ENCODE measurements at regions of chr9 and their contacts with region 1.

Region 1: DNA sequence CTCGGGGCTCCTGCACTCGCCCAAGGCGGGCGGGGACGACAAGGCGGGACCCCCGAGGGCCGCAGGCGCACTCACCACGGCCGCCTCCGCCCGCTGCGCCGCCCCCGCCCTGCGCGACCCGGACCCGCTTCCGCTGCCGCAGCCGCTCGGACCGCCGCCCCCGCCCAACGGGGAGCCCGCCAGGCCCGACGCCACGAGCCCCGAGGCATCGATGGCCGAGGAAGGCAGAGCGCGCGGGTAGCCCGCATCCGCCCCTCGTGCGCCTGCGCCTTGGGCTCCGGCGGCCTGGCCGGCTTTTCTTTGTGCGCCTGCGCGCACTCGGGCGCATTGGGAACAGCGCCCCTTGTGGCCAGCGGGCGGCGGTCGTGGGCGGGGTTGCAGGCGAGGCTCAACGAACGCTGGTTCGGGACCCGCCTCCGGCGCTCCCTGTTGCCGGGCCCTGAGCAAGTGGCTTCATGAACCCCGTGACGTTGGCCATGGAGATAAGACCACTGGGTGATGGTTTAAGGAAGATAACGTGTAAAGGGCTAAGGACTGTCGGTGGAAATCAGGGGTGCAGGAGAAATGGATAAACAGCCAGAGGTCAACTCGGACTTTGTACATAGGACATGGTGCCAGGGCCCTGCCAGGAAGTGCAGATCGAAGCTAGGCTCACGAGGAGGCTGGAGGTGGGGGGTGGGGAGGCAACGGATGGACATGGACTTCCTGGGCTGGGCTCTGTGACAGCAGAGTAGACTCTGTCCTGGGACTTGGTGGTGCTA is at the starts of genes C8G and FBXW5:
- DNase-seq: peak; percentile 96 to 99 (median 97)
- ATAC-seq: peak; percentile 23 to 72 (median 67)
- H3K4me3 ChIP-seq: peak within 1 kb of the TSS; percentile 67 to 97 (median 92)
- H3K27ac ChIP-seq: peak within 1 kb of the TSS; percentile 90 to 98 (median 97)
- H3K4me1 ChIP-seq: peaks cover 7 to 70% (median 40%) of the 10 kb centered on the region in 12 donors
- H3K27me3 ChIP-seq: no peaks in the 10 kb centered on the region
- CTCF ChIP-seq: peak; percentile 90 to 100 (median 98)
- POLR2A ChIP-seq: peak; percentile 59 to 84
- total RNA-seq, gene C8G: 1.2 to 3.7 (median 1.5) TPM in 7 of 9 donors, not detected in the others
- total RNA-seq, gene FBXW5: 110 to 388 (median 147) TPM

Region 2: GRCh38 chr9:136799854-136800657 is 144.6 kb before region 1 on chr9:
- intact Hi-C with region 1: loop called in 1 of 10 experiments (anchors 5 kb)
- DNase-seq: peak; percentile 76 to 92 (median 86)
- ATAC-seq: peak; percentile 59 to 80 (median 66)
- H3K4me3 ChIP-seq: peak overlapping the region; percentile 11 to 62 (median 48)
- H3K27ac ChIP-seq: peak overlapping the region in 7 of 12 donors; percentile 22 to 52 (median 39)
- H3K4me1 ChIP-seq: peaks cover 4 to 52% (median 33%) of the 10 kb centered on the region in 12 donors
- H3K27me3 ChIP-seq: peaks cover 6 to 55% (median 15%) of the 10 kb centered on the region in 9 donors
- CTCF ChIP-seq: no peak
- POLR2A ChIP-seq: no peak

Region 3: DNA sequence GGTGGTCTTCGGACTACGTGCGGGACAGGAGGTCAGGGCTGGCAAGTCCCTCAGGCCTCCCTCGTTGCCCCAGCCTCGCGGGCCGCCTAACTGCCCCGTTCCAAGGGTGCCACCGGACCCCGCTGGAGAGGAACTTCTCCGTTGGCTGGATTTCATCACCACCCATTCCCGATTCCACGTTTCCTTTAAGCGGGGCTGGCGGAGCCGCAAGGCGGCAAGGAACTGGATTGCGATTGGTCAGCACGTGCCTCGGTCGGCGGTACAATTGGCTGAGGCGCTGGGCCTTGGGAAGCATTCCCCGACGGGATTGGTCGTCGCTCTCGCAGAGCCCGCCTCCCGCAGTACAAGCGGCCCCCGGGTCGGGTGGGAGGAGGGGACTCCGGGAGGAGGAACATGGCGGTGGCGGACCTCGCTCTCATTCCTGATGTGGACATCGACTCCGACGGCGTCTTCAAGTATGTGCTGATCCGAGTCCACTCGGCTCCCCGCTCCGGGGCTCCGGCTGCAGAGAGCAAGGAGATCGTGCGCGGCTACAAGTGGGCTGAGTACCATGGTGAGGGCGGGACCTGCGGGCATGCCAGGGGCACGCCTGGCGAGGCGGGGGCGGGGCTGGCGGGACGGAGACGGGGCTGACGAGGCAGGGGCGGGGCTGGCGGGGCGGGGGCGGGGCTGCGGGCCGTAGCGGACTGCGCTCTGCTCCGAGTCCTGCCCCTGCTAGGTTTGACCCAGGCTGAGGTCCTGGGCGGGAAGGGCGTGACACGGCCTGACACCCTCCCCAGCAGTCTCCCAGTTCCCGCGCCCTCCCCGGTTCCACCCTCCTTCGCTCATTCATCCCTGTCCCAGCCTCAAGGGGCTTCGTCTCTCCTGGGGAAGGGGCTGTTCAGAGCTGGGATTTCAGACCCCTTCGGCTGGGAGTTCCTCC is 95.4 kb before region 1 on chr9 and contains the start of gene PHPT1:
- intact Hi-C with region 1: loop called in 9 of 10 experiments (anchors 2 to 5 kb)
- DNase-seq: peak; percentile 99
- ATAC-seq: peak; percentile 84 to 94 (median 89)
- H3K4me3 ChIP-seq: peak within 1 kb of the TSS; percentile 63 to 93 (median 84)
- H3K27ac ChIP-seq: peak within 1 kb of the TSS; percentile 80 to 97 (median 92)
- H3K4me1 ChIP-seq: peaks cover 4 to 61% (median 27%) of the 10 kb centered on the region in 12 donors
- H3K27me3 ChIP-seq: peaks cover 0 to 28% (median 13%) of the 10 kb centered on the region in 9 donors
- CTCF ChIP-seq: no peak
- POLR2A ChIP-seq: peak; percentile 71 to 85
- total RNA-seq, gene PHPT1: 230 to 386 (median 266) TPM

Region 4: DNA sequence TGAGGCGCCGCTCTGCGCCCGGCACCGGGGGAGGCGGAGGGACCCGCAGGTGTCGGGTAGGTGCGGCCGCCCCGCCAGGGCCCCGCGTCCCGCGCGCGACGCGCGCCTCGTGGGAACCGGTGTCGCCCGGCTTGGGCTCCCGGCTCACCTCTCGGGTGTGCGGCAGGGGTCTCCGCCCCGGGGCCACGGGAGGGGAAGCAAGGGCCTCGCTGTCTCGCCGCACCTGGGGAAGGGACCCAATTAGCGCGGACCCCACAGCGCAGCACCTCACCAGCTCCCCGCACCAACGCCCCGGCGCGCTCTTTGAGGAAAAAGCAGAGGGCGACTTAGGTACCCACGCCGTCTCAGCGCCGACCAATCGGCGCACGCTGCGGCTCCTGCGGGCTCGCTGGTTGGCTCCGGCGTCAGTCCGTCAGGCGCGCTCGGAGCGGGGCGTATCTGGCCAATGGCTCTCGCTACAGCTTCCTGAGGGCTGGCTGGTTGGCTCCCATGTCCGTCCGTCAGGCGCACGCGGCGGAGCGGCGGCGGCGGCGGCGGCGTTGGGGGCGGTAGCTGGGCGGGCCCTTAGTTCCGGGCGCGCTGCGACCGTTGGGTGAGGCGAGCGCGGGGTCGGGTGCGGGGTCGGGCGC is 58.6 kb before region 1 on chr9 and contains the start of gene TRAF2:
- intact Hi-C with region 1: loop called in 3 of 10 experiments (anchors 5 to 10 kb)
- DNase-seq: peak; percentile 98 to 99 (median 99)
- ATAC-seq: peak; percentile 98 to 99 (median 98)
- H3K4me3 ChIP-seq: peak within 1 kb of the TSS; percentile 73 to 93 (median 84)
- H3K27ac ChIP-seq: peak within 1 kb of the TSS in 11 of 12 donors; percentile 73 to 93 (median 87)
- H3K4me1 ChIP-seq: peaks cover 5 to 56% (median 34%) of the 10 kb centered on the region in 12 donors
- H3K27me3 ChIP-seq: no peaks in the 10 kb centered on the region
- CTCF ChIP-seq: no peak
- POLR2A ChIP-seq: peak in 1 of 2 donors; percentile 85
- total RNA-seq, gene TRAF2: 6.3 to 14.7 (median 9.1) TPM

Region 5: GRCh38 chr9:136981588-136982231 is 37.0 kb after region 1 on chr9:
- intact Hi-C with region 1: loop called in 2 of 10 experiments (anchors 1 to 5 kb)
- DNase-seq: peak; percentile 72 to 89 (median 85)
- ATAC-seq: peak; percentile 10 to 61 (median 22)
- H3K4me3 ChIP-seq: no peak overlapping the region
- H3K27ac ChIP-seq: peak overlapping the region; percentile 27 to 98 (median 84)
- H3K4me1 ChIP-seq: peaks cover 4 to 86% (median 45%) of the 10 kb centered on the region in 12 donors
- H3K27me3 ChIP-seq: peaks cover 0 to 36% (median 6%) of the 10 kb centered on the region in 9 donors
- CTCF ChIP-seq: peak in 4 of 12 donors; percentile 9 to 38 (median 32)
- POLR2A ChIP-seq: peak in 1 of 2 donors; percentile 26

Region 6: DNA sequence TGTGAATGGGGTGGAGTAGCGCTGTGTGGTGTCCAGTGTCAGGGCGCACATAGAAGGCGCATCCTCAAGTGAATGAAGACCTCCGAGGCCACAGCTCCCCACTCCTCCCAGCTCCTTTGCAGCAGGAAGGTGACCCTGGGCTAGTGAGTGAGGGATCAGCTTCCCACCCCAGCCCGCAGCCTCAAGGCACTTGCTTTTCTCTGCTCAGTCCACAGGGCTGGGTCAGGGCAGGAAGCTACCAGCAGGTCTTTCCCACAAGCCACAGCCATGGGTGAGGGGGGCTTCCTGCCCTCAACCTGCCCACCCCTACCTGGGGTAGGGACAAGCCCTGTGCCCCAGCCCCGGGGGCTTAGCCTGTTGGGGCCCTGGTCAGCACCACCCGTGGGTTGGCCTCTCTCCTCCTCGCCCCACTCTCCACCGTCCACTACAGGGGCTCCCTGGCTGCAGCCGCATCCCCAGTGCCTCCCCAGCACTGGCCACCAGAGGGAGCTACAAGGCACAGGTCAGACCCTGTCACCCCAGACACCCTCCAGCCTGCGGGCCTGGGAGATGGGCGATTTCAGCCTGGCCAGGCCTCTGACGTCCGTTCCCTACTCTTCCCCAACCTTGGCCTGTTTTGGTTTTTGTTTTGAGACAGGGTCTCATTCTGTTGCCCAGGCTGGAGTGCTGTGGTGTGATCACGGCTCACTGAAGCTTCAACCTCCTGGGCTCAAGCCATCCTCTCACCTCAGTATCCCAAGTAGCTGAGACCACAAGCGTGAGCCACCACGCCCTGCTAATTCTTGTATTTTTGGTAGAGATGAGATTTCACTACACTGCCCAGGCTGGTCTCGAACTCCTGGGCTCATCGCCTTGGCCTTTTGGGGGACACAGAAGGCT is 84.6 kb after region 1 on chr9:
- intact Hi-C with region 1: loop called in 7 of 10 experiments (anchors 2 to 5 kb)
- DNase-seq: peak; percentile 73 to 91 (median 82)
- ATAC-seq: peak; percentile 28 to 76 (median 70)
- H3K4me3 ChIP-seq: peak overlapping the region in 11 of 12 donors; percentile 45 to 79 (median 67)
- H3K27ac ChIP-seq: peak overlapping the region in 1 of 12 donors; percentile 87
- H3K4me1 ChIP-seq: peaks cover 5 to 68% (median 25%) of the 10 kb centered on the region in 12 donors
- H3K27me3 ChIP-seq: no peaks in the 10 kb centered on the region
- CTCF ChIP-seq: peak; percentile 74 to 96 (median 90)
- POLR2A ChIP-seq: no peak

Measured in heart left ventricle (tissue), 16 donors.